ENCODE measurements at regions of chr5 and their contacts with region 1.

Region 1: DNA sequence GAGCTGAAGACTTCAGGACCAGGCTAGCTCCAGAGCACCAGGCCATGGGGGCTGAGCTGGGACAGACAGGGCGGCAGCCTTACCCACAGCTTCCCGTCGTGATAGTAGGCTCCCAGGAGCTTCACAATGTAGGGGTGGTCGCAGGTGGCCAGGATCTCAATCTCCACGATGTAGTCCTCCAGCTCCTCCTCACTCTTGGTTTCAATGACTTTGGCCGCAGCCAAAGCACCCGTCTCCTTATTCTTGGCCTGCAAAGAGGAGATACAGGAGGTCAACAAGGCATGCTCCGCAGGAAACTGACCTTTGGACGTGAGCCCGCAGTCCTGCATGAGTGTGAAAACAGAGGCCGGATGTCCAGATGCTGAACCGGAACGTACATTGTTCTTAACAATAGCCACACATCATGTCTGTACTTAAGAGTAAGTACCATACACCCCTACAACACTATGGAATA is 31.5 kb downstream of the STK10 start:
- DNase-seq: peak; percentile 98
- H3K4me3 ChIP-seq: no peak overlapping the region
- H3K27ac ChIP-seq: peak overlapping the region; percentile 75
- H3K4me1 ChIP-seq: peaks cover 15% of the 10 kb centered on the region
- H3K27me3 ChIP-seq: no peaks in the 10 kb centered on the region
- CTCF ChIP-seq: no peak
- POLR2A ChIP-seq: peak; percentile 25

Region 2: GRCh38 chr5:172179361-172179989 is 22.9 kb after region 1 on chr5:
- CTCF ChIA-PET with region 1: interaction called, 3 read pairs
- POLR2A ChIA-PET with region 1: interaction called, 6 read pairs
- dilution Hi-C with region 1: no loop called
- intact Hi-C with region 1: loop called (anchors 1 kb)
- DNase-seq: peak; percentile 75
- H3K4me3 ChIP-seq: peak overlapping the region in 1 of 3 experiments; percentile 48
- H3K27ac ChIP-seq: peak overlapping the region; percentile 59
- H3K4me1 ChIP-seq: peaks cover 24% of the 10 kb centered on the region
- H3K27me3 ChIP-seq: no peaks in the 10 kb centered on the region
- CTCF ChIP-seq: no peak
- POLR2A ChIP-seq: no peak

Measured in endothelial cell of umbilical vein (primary cell).